ENCODE measurements at regions of chr6 and their contacts with region 1.

Region 1: GRCh38 chr6:106637717-106638341 is 8.5 kb downstream of the QRSL1 start:
- DNase-seq: peak; percentile 79
- ATAC-seq: peak; percentile 85
- H3K4me3 ChIP-seq: peak overlapping the region; percentile 25 to 59 (median 35)
- H3K4me3 Mint-ChIP-seq: peak overlapping the region; percentile 74
- H3K27ac ChIP-seq: peak overlapping the region; percentile 81 to 89
- H3K27ac Mint-ChIP-seq: peak overlapping the region; percentile 95
- H3K4me1 ChIP-seq: peaks cover 64 to 68% of the 10 kb centered on the region in 2 donors
- H3K4me1 Mint-ChIP-seq: peaks cover 64% of the 10 kb centered on the region
- H3K27me3 ChIP-seq: no peaks in the 10 kb centered on the region
- H3K27me3 Mint-ChIP-seq: no peaks in the 10 kb centered on the region
- CTCF ChIP-seq: no peak

Region 2: GRCh38 chr6:106244931-106245330 is 392.9 kb before region 1 on chr6:
- CTCF ChIA-PET with region 1: no interaction called
- POLR2A ChIA-PET with region 1: no interaction called
- intact Hi-C with region 1: no loop called
- DNase-seq: no peak
- ATAC-seq: no peak
- H3K4me3 ChIP-seq: no peak overlapping the region
- H3K4me3 Mint-ChIP-seq: no peak overlapping the region
- H3K27ac ChIP-seq: no peak overlapping the region
- H3K27ac Mint-ChIP-seq: no peak overlapping the region
- H3K4me1 ChIP-seq: no peaks in the 10 kb centered on the region
- H3K4me1 Mint-ChIP-seq: peaks cover 9% of the 10 kb centered on the region
- H3K27me3 ChIP-seq: no peaks in the 10 kb centered on the region
- H3K27me3 Mint-ChIP-seq: no peaks in the 10 kb centered on the region
- CTCF ChIP-seq: no peak

Region 3: GRCh38 chr6:106470316-106470715 is 167.5 kb before region 1 on chr6:
- CTCF ChIA-PET with region 1: no interaction called
- POLR2A ChIA-PET with region 1: no interaction called
- intact Hi-C with region 1: no loop called
- DNase-seq: no peak
- ATAC-seq: no peak
- H3K4me3 ChIP-seq: no peak overlapping the region
- H3K4me3 Mint-ChIP-seq: no peak overlapping the region
- H3K27ac ChIP-seq: no peak overlapping the region
- H3K27ac Mint-ChIP-seq: no peak overlapping the region
- H3K4me1 ChIP-seq: no peaks in the 10 kb centered on the region
- H3K4me1 Mint-ChIP-seq: no peaks in the 10 kb centered on the region
- H3K27me3 ChIP-seq: no peaks in the 10 kb centered on the region
- H3K27me3 Mint-ChIP-seq: peaks cover 6% of the 10 kb centered on the region
- CTCF ChIP-seq: no peak

Region 4: DNA sequence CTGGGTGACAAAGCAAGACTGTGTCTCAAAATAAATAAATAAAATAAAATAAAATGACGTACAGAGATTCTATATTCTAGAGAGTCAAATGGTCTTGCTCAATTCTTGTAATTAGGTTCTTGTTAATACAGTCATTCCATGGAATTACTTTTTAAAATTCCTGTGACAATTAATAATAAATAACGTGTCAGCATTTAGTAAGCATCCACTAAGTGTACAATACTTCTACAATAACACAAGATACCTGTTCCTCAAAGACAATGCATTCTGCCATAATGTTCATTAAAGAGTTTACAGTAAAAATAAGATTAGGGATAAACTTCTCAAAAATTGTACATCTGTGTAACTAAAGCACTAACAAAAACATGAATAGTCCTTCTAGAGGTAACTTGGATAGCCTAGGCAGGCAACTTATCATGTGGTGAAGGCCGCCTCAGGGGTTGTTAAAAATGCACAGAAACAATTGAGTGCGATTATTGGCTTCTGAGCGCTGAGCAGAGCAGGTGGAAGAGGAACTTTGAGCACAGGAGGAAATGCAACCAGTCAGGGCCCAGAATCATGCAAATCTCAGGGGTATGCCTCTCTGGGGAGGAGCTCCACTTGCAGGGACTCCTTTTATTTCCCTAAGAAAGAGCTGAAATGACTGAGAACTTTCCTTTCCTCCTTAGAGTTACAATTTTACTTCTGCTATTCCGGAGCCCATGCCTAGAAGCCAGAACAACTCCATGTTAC is 28.6 kb after region 1 on chr6:
- CTCF ChIA-PET with region 1: interaction called, 3 read pairs
- POLR2A ChIA-PET with region 1: interaction called, 6 read pairs
- intact Hi-C with region 1: loop called (anchors 2 kb)
- DNase-seq: peak; percentile 86
- ATAC-seq: peak; percentile 99
- H3K4me3 ChIP-seq: peak overlapping the region in 2 of 5 experiments; percentile 2 to 29
- H3K4me3 Mint-ChIP-seq: peak overlapping the region; percentile 80
- H3K27ac ChIP-seq: peak overlapping the region; percentile 30 to 81
- H3K27ac Mint-ChIP-seq: peak overlapping the region; percentile 93
- H3K4me1 ChIP-seq: peaks cover 49 to 61% of the 10 kb centered on the region in 2 donors
- H3K4me1 Mint-ChIP-seq: peaks cover 64% of the 10 kb centered on the region
- H3K27me3 ChIP-seq: no peaks in the 10 kb centered on the region
- H3K27me3 Mint-ChIP-seq: no peaks in the 10 kb centered on the region
- CTCF ChIP-seq: no peak

Measured in B cell (primary cell).